ENCODE measurements at regions of chr12 and their contacts with region 1.

Region 1: DNA sequence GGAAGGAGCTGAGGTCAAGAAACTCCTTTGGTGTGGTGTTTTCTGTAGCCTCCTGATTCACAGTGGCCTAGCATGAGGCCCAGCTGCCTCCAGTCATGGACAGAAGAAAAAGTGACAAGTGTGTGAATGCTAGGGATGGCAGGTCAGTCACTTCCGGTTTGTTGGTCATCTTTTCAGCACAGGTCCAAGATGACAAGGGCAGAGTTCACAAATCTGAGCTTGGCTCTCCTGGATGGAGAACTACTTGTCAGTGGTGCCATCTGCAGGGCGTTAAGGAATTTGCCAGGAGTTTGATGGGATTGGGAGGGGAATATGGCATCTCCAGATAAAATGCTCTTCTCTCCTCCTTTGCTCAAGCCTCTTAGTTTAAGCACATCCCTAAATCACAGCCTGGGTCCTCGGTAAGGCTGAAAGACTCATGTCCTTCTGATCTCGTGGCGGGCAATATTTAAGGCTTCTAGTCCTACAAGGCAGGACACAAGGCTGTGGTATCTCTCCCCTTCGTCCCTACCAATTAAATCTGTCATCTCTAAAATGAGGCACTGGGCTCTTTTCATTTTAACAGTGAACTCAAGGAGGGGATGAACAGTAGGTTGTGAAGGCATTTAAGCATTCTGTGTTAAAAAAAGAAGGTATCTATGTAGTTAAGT is 10.0 kb downstream of the TUBA1B start:
- DNase-seq: peak; percentile 65
- H3K4me3 ChIP-seq: no peak overlapping the region
- H3K27ac ChIP-seq: no peak overlapping the region
- H3K4me1 ChIP-seq: no peaks in the 10 kb centered on the region
- H3K27me3 ChIP-seq: no peaks in the 10 kb centered on the region
- CTCF ChIP-seq: peak; percentile 64 to 67
- POLR2A ChIP-seq: no peak

Region 2: DNA sequence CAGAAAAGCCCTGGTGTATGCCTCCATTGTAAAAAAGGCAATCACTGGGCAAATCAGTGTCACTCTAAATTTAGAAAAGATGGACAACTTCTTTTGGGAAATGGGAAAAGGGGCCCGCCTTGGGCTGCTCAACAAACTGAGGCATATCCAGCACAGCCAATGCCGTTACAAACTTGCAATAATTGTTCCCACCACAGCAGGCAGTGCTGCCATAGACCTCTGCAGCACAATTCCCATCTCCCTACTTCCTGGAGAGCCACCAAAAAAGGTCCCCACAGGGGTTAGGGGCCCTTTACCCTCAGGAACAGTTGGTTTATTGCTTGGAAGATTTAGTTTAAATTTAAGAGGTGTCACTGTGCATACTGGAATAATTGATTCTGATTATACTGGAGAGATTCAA is 612.2 kb before region 1 on chr12:
- CTCF ChIA-PET with region 1: no interaction called
- POLR2A ChIA-PET with region 1: no interaction called
- dilution Hi-C with region 1: no loop called
- intact Hi-C with region 1: no loop called
- DNase-seq: no peak
- H3K4me3 ChIP-seq: no peak overlapping the region
- H3K27ac ChIP-seq: no peak overlapping the region
- H3K4me1 ChIP-seq: no peaks in the 10 kb centered on the region
- H3K27me3 ChIP-seq: peaks cover 5 to 6% of the 10 kb centered on the region in 2 experiments
- CTCF ChIP-seq: no peak
- POLR2A ChIP-seq: no peak

Region 3: GRCh38 chr12:49060237-49061156 is 60.7 kb before region 1 on chr12 and contains the start of gene KMT2D:
- CTCF ChIA-PET with region 1: interaction called, 197 read pairs
- POLR2A ChIA-PET with region 1: interaction called, 3 read pairs
- dilution Hi-C with region 1: no loop called
- intact Hi-C with region 1: loop called (anchors 1 kb)
- DNase-seq: peak; percentile 92
- H3K4me3 ChIP-seq: peak within 1 kb of the TSS; percentile 73 to 97 (median 77)
- H3K27ac ChIP-seq: peak within 1 kb of the TSS; percentile 93
- H3K4me1 ChIP-seq: peaks cover 39% of the 10 kb centered on the region
- H3K27me3 ChIP-seq: no peaks in the 10 kb centered on the region
- CTCF ChIP-seq: peak; percentile 6 to 13
- POLR2A ChIP-seq: peak; percentile 85
- total RNA-seq, gene KMT2D: 106 and 120 TPM in 2 replicates

Region 4: GRCh38 chr12:49088190-49088931 is 32.8 kb before region 1 on chr12:
- CTCF ChIA-PET with region 1: interaction called, 248 read pairs
- POLR2A ChIA-PET with region 1: interaction called, 8 read pairs
- dilution Hi-C with region 1: no loop called
- intact Hi-C with region 1: loop called (anchors 1 kb)
- DNase-seq: peak; percentile 91
- H3K4me3 ChIP-seq: no peak overlapping the region
- H3K27ac ChIP-seq: no peak overlapping the region
- H3K4me1 ChIP-seq: peaks cover 39% of the 10 kb centered on the region
- H3K27me3 ChIP-seq: no peaks in the 10 kb centered on the region
- CTCF ChIP-seq: peak; percentile 90 to 95
- POLR2A ChIP-seq: no peak

Region 5: DNA sequence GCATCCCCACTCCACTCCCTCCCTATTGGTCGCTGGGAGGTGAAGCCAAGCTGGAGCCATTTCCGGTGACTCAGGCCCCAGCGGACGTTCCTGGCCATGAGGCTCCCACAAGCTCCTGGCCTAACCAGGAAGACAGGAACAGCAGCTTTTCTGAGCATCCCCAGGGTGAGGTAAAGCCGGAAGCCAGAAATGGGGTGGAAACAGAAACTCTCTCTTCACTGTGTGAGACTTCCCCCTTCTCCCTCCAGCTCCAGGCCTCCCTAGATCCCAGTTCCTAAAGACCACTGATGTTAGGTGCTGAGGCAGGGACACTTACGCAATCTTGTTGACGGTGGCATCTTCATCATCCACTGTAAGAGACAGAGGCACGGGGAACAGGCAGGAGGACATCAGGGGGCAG is 15.6 kb before region 1 on chr12:
- CTCF ChIA-PET with region 1: interaction called, 124 read pairs
- POLR2A ChIA-PET with region 1: interaction called, 4 read pairs
- dilution Hi-C with region 1: no loop called
- intact Hi-C with region 1: no loop called
- DNase-seq: peak; percentile 37
- H3K4me3 ChIP-seq: no peak overlapping the region
- H3K27ac ChIP-seq: peak overlapping the region; percentile 54
- H3K4me1 ChIP-seq: peaks cover 38% of the 10 kb centered on the region
- H3K27me3 ChIP-seq: no peaks in the 10 kb centered on the region
- CTCF ChIP-seq: no peak
- POLR2A ChIP-seq: no peak